ENCODE measurements at regions of chr15 and their contacts with region 1.

Region 1: GRCh38 chr15:78308422-78309032 is 9.1 kb upstream of the SKIC8 start:
- DNase-seq: peak; percentile 95
- ATAC-seq: peak; percentile 93
- H3K4me3 Mint-ChIP-seq: no peak overlapping the region
- H3K27ac Mint-ChIP-seq: no peak overlapping the region
- H3K4me1 Mint-ChIP-seq: peaks cover 17% of the 10 kb centered on the region
- H3K27me3 Mint-ChIP-seq: no peaks in the 10 kb centered on the region
- CTCF ChIP-seq: peak; percentile 86

Region 2: DNA sequence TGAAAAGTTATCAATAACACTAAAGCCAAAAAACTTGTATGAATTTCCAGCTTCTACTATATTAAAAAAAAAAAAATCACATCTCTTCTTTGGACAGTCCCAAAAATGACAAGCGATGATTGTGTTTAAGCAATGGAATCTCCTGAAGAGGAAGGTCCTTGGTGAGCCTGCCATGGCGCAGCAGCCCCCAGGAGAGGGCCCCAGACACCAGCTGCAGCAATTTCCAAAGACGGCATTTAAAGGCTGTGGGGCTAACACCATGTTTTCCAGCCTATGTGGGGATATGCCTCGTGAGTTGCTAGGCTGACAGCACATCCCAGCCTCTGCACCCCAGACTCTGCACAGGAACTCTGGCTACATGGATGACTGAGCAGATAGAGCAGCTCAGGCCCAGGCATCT is 23.8 kb before region 1 on chr15:
- CTCF ChIA-PET with region 1: no interaction called
- POLR2A ChIA-PET with region 1: no interaction called
- DNase-seq: no peak
- ATAC-seq: peak; percentile 57
- H3K4me3 Mint-ChIP-seq: no peak overlapping the region
- H3K27ac Mint-ChIP-seq: no peak overlapping the region
- H3K4me1 Mint-ChIP-seq: no peaks in the 10 kb centered on the region
- H3K27me3 Mint-ChIP-seq: no peaks in the 10 kb centered on the region
- CTCF ChIP-seq: no peak

Region 3: GRCh38 chr15:78415286-78415685 is 106.8 kb after region 1 on chr15:
- CTCF ChIA-PET with region 1: interaction called, 28 read pairs
- POLR2A ChIA-PET with region 1: interaction called, 3 read pairs
- DNase-seq: no peak
- ATAC-seq: peak; percentile 85
- H3K4me3 Mint-ChIP-seq: no peak overlapping the region
- H3K27ac Mint-ChIP-seq: no peak overlapping the region
- H3K4me1 Mint-ChIP-seq: peaks cover 12% of the 10 kb centered on the region
- H3K27me3 Mint-ChIP-seq: peaks cover 8% of the 10 kb centered on the region; the same call in 1 of the 2 replicates
- CTCF ChIP-seq: no peak

Region 4: DNA sequence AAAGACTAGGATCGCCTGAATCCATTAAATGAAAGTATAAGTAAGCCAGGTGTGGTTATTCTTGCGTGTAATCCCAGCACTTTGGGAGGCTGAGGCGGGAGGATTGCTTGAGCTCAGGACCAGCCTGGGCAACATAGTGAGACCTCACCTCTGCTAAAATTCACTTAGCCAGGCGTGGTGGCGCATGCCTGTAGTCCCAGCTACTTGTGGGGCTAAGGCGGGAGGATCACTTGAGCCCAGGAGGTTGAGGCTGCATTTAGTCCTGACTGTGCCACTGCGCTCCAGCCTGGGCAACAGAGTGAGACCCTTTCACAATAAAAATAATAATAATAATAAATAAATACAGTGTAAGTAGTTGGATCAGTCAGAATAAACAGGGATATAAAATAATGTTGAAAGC is 173.4 kb after region 1 on chr15:
- CTCF ChIA-PET with region 1: interaction called, 18 read pairs
- POLR2A ChIA-PET with region 1: no interaction called
- DNase-seq: no peak
- ATAC-seq: no peak
- H3K4me3 Mint-ChIP-seq: no peak overlapping the region
- H3K27ac Mint-ChIP-seq: 0 out of 2 replicates have a peak overlapping the region, but pooled peaks have one; percentile 83
- H3K4me1 Mint-ChIP-seq: no peaks in the 10 kb centered on the region
- H3K27me3 Mint-ChIP-seq: no peaks in the 10 kb centered on the region
- CTCF ChIP-seq: no peak

Measured in WTC11 (cell line).